H1 (cell line): ENCODE measurements at regions of chr3 and their contacts with region 1.

Region 1: GRCh38 chr3:68876112-68876713 is 56.1 kb downstream of the TAFA4 start:
- DNase-seq: peak in 1 of 2 experiments; percentile 21
- H3K4me3 ChIP-seq: no peak overlapping the region
- H3K27ac ChIP-seq: no peak overlapping the region
- H3K4me1 ChIP-seq: no peaks in the 10 kb centered on the region
- H3K27me3 ChIP-seq: no peaks in the 10 kb centered on the region
- CTCF ChIP-seq: peak in 2 of 3 experiments; percentile 65 to 76; a peak in 3 of 4 replicates
- EP300 ChIP-seq: no peak
- POLR2A ChIP-seq: no peak
- RAD21 ChIP-seq: peak; percentile 93 to 96

Region 2: DNA sequence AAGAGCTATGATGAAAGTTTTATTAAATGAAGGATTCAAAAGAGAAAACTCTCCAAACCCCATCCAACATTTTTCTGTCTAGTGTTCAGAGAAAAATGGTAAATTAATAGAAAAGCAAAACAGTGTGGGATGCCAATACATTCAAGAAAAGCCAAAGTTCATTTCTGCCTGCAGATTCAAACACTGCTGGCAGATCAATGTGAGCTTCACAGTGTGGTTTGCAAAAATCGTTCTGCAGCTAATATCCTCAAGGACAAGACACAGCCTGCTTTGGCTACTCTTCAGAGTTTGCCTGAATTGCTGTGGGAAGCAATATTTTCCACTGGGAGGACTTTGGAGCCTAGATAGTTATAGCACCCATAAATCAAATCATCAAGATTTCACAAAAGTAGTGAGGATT is 601.9 kb before region 1 on chr3:
- CTCF ChIA-PET with region 1: interaction called, 14 read pairs
- POLR2A ChIA-PET with region 1: no interaction called
- DNase-seq: no peak
- H3K4me3 ChIP-seq: no peak overlapping the region
- H3K27ac ChIP-seq: no peak overlapping the region
- H3K4me1 ChIP-seq: 0 out of 7 replicates have a peak, but pooled peaks cover 0 to 2% (median 0%) of the 10 kb centered on the region in 4 experiments
- H3K27me3 ChIP-seq: no peaks in the 10 kb centered on the region
- CTCF ChIP-seq: no peak
- EP300 ChIP-seq: no peak
- POLR2A ChIP-seq: no peak
- RAD21 ChIP-seq: no peak

Region 3: DNA sequence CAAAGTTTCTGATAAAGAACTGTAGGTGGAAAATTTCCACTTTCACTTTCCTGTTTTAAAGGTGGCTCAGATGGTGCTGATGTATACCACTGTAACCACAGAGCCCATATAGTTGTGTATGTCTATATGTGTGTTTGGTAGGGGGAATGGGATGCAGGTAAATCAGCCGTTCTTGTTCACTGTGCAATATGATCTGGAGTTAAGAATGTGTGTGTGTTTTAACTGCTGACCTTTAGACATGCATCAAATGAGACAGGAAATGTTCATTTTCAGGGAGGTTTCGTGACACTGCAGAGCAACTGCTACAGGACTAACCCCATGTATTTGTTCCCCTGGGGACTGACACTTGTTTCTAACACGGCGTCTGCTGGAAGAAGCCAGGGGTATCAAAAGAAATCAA is 124.3 kb before region 1 on chr3:
- CTCF ChIA-PET with region 1: no interaction called
- POLR2A ChIA-PET with region 1: no interaction called
- DNase-seq: no peak
- H3K4me3 ChIP-seq: no peak overlapping the region
- H3K27ac ChIP-seq: no peak overlapping the region
- H3K4me1 ChIP-seq: no peaks in the 10 kb centered on the region
- H3K27me3 ChIP-seq: no peaks in the 10 kb centered on the region; a peak in 1 of 7 replicates
- CTCF ChIP-seq: no peak
- EP300 ChIP-seq: no peak
- POLR2A ChIP-seq: no peak
- RAD21 ChIP-seq: no peak

Region 4: DNA sequence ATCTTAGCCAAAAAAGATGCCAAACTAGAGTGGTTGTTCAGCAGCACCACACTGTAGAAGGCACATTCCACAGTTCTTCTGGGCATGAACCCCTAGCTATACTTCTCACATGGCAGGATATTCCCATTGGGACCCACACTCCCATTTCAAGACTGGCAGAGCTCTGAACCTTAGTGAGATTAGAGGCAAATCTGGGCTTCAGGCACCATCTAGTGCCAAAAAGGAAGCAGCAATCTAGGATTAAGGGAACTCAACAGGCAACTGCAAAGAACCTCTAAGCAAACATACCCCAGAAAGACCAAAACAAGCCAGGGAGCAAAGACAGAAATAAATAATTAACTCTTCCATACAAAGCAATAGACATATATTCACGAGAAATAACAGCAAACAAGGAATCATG is 10.1 kb before region 1 on chr3:
- CTCF ChIA-PET with region 1: interaction called, 30 read pairs
- POLR2A ChIA-PET with region 1: no interaction called
- DNase-seq: no peak
- H3K4me3 ChIP-seq: no peak overlapping the region
- H3K27ac ChIP-seq: no peak overlapping the region
- H3K4me1 ChIP-seq: no peaks in the 10 kb centered on the region
- H3K27me3 ChIP-seq: no peaks in the 10 kb centered on the region
- CTCF ChIP-seq: peak in 2 of 3 experiments; percentile 60 to 64; a peak in 3 of 4 replicates
- EP300 ChIP-seq: no peak
- POLR2A ChIP-seq: no peak
- RAD21 ChIP-seq: peak; percentile 83 to 89